ENCODE measurements at regions of chr15 and their contacts with region 1.

Region 1: GRCh38 chr15:89129123-89129815 is 41.0 kb downstream of the ABHD2 start:
- DNase-seq: no peak
- H3K4me3 ChIP-seq: no peak overlapping the region
- H3K27ac ChIP-seq: peak overlapping the region; percentile 1 to 69 (median 19)
- H3K4me1 ChIP-seq: peaks cover 35 to 65% (median 51%) of the 10 kb centered on the region in 4 donors
- H3K27me3 ChIP-seq: no peaks in the 10 kb centered on the region
- CTCF ChIP-seq: peak; percentile 53 to 71 (median 68)
- EP300 ChIP-seq: no peak
- POLR2A ChIP-seq: no peak

Region 2: GRCh38 chr15:89057504-89058133 is 71.7 kb before region 1 on chr15:
- intact Hi-C with region 1: loop called (anchors 5 kb)
- DNase-seq: peak; percentile 97
- H3K4me3 ChIP-seq: no peak overlapping the region
- H3K27ac ChIP-seq: peak overlapping the region in 1 of 4 donors; percentile 10
- H3K4me1 ChIP-seq: peaks cover 5 to 14% (median 11%) of the 10 kb centered on the region in 4 donors
- H3K27me3 ChIP-seq: no peaks in the 10 kb centered on the region
- CTCF ChIP-seq: peak; percentile 98 to 99 (median 98)
- EP300 ChIP-seq: no peak
- POLR2A ChIP-seq: no peak

Region 3: GRCh38 chr15:89087830-89088604 is 41.3 kb before region 1 on chr15 and contains the start of gene ABHD2:
- intact Hi-C with region 1: loop called (anchors 5 kb)
- DNase-seq: peak; percentile 100
- H3K4me3 ChIP-seq: peak within 1 kb of the TSS; percentile 72 to 90 (median 80)
- H3K27ac ChIP-seq: peak within 1 kb of the TSS; percentile 91 to 96 (median 93)
- H3K4me1 ChIP-seq: peaks cover 40 to 74% (median 69%) of the 10 kb centered on the region in 4 donors
- H3K27me3 ChIP-seq: no peaks in the 10 kb centered on the region
- CTCF ChIP-seq: peak in 1 of 3 experiments; percentile 39
- EP300 ChIP-seq: no peak
- POLR2A ChIP-seq: peak; percentile 97
- total RNA-seq, gene ABHD2: 49.8 to 82.3 (median 72.1) TPM

Region 4: GRCh38 chr15:89171136-89172072 is 42.1 kb after region 1 on chr15:
- intact Hi-C with region 1: loop called (anchors 5 kb)
- DNase-seq: no peak
- H3K4me3 ChIP-seq: no peak overlapping the region
- H3K27ac ChIP-seq: no peak overlapping the region
- H3K4me1 ChIP-seq: peaks cover 26 to 41% (median 39%) of the 10 kb centered on the region in 4 donors
- H3K27me3 ChIP-seq: no peaks in the 10 kb centered on the region
- CTCF ChIP-seq: peak; percentile 65 to 73 (median 70)
- EP300 ChIP-seq: no peak
- POLR2A ChIP-seq: no peak

Measured in esophagus muscularis mucosa (tissue), 4 donors.